Testis (tissue), 5 donors: ENCODE measurements at regions of chr10 and their contacts with region 1.

Region 1: DNA sequence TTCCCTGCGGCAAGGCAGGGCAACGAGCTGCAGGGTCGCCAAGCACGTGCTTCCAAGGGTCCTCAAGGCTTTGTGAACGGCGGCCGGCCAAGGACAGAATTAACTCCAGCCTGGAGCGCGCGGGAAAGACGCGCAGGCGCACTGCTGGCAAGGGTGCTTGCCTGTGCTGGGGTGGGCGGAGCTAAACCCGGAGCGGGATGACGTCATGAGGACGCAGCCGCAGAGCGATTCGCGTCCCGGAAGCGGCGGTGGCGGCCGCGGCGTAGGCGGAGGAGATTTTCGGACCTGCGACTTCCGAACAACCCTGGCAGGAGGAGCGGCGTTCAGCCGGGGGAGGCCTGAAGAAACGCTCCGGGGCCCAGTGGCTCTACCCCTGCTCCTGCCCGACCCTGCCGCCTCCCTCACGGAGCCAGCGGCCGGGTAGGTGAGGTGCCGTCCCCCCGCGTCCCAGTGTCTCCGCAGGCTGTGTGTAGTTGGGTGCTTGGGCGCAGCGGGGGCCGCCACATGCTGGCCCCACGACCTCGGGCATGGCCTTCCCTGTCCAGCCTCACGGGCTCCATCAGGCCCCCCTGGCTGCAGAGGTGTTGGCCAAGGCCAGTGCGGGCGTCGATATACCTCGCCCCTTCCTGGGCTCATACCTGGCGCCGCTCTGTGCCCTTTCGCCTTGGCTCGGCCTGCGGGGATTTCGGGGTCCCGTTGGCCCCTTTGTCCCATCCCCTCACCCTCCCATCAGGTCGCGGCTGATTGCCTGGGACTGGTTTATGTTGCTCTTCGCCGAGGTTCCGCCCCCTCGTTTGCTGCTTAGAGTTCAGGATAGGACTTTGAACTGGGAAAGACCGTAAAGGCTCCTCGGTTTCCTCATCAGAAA is at the start of gene ZFYVE27:
- DNase-seq: peak; percentile 96
- H3K4me3 ChIP-seq: peak within 1 kb of the TSS; percentile 82 to 97
- H3K27ac ChIP-seq: peak within 1 kb of the TSS; percentile 78 to 90
- H3K4me1 ChIP-seq: peaks cover 10% of the 10 kb centered on the region
- H3K27me3 ChIP-seq: no peaks in the 10 kb centered on the region
- CTCF ChIP-seq: no peak
- POLR2A ChIP-seq: peak; percentile 80
- total RNA-seq, gene ZFYVE27: 64.8 to 66.4 TPM

Region 2: DNA sequence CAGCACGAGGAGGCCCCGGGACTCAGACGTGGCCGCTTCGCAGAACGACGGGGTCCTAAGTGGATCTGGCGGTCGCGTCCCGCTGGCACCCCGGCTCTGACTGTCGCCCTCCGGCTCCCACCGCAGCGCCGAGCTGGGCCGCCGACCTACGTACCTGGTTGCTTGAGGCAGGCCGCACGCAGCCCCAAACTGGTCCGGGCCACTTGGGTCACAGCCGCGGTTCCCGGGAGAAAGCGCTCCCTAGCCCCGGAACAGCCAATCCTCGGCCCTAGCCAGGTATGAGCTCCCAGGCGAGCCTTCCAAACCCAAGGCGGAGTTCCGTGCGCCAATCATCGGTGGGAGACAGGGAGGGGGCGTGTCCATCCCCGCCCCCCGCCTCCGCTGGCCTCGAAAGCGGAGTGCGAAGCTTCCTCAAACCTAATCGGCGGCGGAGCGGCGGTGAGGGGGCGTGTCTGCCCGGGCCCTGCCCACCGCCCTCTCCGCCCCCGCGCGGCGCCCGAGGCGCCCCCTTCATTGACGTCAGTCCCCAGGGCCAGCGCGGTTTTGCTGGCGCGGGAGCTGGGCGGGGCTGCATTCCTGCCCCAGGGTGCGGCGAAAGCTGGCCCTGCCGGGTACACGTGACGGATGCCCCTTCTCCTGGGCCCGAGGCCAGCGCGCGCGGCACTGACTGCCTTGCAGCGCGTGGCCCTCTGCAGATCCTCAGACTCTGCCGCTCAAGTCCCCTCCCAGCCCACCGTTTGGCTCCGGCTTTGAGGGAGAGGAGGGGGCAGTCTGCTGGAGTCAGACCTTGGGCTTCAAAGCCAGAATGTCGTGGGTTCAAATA is 50.0 kb before region 1 on chr10 and contains the start of gene AVPI1:
- intact Hi-C with region 1: loop called (anchors 10 kb)
- DNase-seq: peak; percentile 98
- H3K4me3 ChIP-seq: peak within 1 kb of the TSS; percentile 62 to 74
- H3K27ac ChIP-seq: peak within 1 kb of the TSS; percentile 79 to 96
- H3K4me1 ChIP-seq: peaks cover 49% of the 10 kb centered on the region
- H3K27me3 ChIP-seq: no peaks in the 10 kb centered on the region
- CTCF ChIP-seq: no peak
- POLR2A ChIP-seq: peak; percentile 93
- total RNA-seq, gene AVPI1: 23.0 to 28.3 TPM

Region 3: DNA sequence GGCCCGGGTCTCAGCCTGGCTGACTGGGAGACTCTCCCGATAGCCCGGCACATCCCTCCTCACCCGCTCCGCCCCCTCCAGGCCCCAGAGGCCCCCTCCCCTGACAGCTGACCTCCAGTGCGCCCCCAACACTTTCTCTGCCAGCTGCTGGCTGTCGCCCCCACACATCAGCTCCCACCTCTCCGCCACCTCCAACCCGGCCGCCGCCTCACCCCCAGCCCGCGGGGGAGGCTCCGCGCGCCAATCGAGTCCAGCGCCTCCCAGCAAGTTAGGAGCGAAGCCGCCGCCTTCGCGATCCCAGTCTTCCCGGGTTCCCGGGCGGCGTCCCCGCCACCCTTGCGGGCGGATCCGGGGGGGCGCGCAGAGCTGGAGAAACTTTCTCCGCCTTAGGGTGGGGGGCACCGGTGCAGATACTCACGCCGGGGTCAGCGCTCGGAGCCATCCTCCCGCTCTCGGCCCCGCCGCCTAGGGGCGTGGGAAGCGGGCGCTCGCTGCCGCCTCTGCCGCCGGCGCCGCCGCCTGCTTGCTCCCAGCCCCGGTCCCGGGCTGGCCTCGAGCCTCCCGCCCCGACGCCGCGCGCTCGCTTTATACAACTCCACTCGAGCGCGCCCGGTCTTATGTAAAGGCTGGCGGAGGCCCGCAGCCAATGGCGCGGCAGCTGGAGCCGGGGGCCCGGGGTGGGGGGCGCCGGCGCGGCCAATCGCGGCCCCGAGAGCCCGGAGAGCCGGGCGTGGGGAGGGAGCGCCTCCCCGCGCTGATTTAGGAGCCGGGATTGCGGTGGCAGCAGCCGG is 293.1 kb after region 1 on chr10 and contains the start of gene CRTAC1:
- intact Hi-C with region 1: no loop called
- DNase-seq: peak; percentile 72
- H3K4me3 ChIP-seq: peak within 1 kb of the TSS; percentile 10 to 60
- H3K27ac ChIP-seq: no peak within 1 kb of the TSS
- H3K4me1 ChIP-seq: peaks cover 7% of the 10 kb centered on the region
- H3K27me3 ChIP-seq: no peaks in the 10 kb centered on the region
- CTCF ChIP-seq: no peak
- POLR2A ChIP-seq: no peak
- total RNA-seq, gene CRTAC1: 7.5 to 12.2 TPM